ENCODE measurements at regions of chr11 and their contacts with region 1.

Region 1: DNA sequence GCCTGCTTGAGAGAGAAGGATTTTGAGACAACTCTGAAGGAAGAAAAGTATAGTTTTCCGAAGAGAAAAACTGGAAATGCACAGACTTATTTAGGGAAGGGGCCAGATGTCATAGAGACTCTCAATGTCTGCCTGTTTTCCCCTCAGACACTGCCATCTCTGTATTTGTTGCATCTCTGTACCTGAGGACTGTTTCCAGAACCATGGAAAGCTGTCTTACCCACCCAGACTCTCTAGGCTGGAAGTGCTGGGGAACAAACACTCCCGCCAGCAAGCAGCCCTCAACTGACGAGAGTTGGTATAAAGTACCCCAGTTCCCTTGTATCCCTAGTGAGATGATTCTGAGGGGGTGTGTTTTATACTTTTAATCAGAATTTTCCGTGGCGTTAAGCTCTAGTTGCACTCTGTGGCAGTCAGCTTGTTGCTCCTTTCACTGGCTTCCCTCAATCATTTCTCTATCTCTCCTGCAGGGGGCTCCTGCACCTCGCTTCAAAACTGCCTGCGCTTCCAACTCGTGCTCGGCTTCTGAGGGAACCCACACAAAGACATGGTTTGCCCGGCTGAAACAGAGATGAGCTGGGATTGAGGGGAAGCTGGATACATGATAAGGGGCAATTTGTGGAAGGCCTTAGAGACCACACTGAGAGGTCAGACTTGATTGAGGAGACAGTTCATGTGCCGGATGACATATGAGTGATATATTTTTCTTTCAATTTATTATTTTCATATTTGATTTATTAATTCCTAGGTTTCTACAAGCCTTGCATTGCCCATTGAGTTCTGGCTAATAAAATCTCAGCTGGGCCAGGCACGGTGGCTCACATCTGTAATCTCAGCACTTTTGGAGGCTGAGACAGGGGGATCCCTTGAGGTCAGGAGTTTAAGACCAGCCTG is 36.9 kb upstream of the CLPB start:
- DNase-seq: peak; percentile 66
- H3K4me3 Mint-ChIP-seq: no peak overlapping the region
- H3K27ac Mint-ChIP-seq: no peak overlapping the region
- H3K4me1 Mint-ChIP-seq: peaks cover 4% of the 10 kb centered on the region
- H3K27me3 Mint-ChIP-seq: peaks cover 57% of the 10 kb centered on the region

Region 2: DNA sequence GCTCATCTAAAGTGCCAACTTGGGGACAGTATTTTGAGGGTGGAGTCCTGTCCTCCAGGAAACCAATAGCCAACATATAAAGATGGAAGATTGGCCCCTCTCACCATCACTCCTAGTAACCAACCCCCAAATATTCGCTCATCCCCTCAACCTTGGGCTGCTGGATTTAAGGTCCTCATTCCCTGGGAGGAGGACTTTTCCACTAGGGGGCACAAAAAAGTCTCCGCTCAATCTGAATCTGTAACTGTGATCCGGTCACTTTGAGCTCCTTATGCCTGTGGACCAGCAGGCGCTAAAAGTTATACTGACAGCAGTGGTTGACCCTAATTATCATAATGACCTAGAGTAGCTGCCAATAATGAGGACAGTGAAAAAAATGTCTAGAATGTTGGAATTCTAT is 16.5 kb before region 1 on chr11:
- CTCF ChIA-PET with region 1: interaction called, 24 read pairs
- POLR2A ChIA-PET with region 1: no interaction called
- DNase-seq: no peak
- H3K4me3 Mint-ChIP-seq: no peak overlapping the region
- H3K27ac Mint-ChIP-seq: no peak overlapping the region
- H3K4me1 Mint-ChIP-seq: no peaks in the 10 kb centered on the region
- H3K27me3 Mint-ChIP-seq: peaks cover 10% of the 10 kb centered on the region

Region 3: GRCh38 chr11:72483412-72484186 is 12.3 kb after region 1 on chr11:
- CTCF ChIA-PET with region 1: interaction called, 15 read pairs
- POLR2A ChIA-PET with region 1: no interaction called
- DNase-seq: no peak
- H3K4me3 Mint-ChIP-seq: no peak overlapping the region
- H3K27ac Mint-ChIP-seq: peak overlapping the region; percentile 45
- H3K4me1 Mint-ChIP-seq: peaks cover 18% of the 10 kb centered on the region
- H3K27me3 Mint-ChIP-seq: peaks cover 8% of the 10 kb centered on the region

Region 4: DNA sequence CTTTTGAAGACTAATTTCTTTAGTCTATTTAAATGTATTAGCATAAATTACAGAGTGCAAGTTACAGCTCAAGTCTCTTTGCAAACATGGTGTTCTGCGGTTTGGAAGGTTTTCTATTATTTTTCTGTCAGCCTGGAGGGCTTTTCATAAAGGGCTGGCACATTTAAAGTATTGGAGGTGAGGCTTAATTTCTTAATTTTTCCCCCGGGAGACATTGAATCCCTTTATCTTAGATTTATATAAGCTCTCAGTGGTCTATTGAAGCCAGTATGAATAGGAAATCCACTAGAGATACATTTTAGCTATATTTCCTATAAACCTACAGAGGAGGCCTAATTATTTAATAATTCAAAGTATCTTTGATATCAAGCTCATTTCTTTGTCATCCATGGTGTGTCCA is 65.8 kb after region 1 on chr11:
- CTCF ChIA-PET with region 1: interaction called, 13 read pairs
- POLR2A ChIA-PET with region 1: interaction called, 3 read pairs
- DNase-seq: no peak
- H3K4me3 Mint-ChIP-seq: no peak overlapping the region
- H3K27ac Mint-ChIP-seq: no peak overlapping the region
- H3K4me1 Mint-ChIP-seq: no peaks in the 10 kb centered on the region
- H3K27me3 Mint-ChIP-seq: peaks cover 45% of the 10 kb centered on the region

Region 5: GRCh38 chr11:72553706-72554105 is 82.5 kb after region 1 on chr11:
- CTCF ChIA-PET with region 1: interaction called, 45 read pairs
- POLR2A ChIA-PET with region 1: interaction called, 7 read pairs
- DNase-seq: peak; percentile 58
- H3K4me3 Mint-ChIP-seq: no peak overlapping the region
- H3K27ac Mint-ChIP-seq: no peak overlapping the region
- H3K4me1 Mint-ChIP-seq: peaks cover 15% of the 10 kb centered on the region
- H3K27me3 Mint-ChIP-seq: peaks cover 25% of the 10 kb centered on the region

Region 6: GRCh38 chr11:72585762-72586311 is 114.6 kb after region 1 on chr11:
- CTCF ChIA-PET with region 1: interaction called, 27 read pairs
- POLR2A ChIA-PET with region 1: no interaction called
- DNase-seq: peak; percentile 75
- H3K4me3 Mint-ChIP-seq: peak overlapping the region; percentile 77
- H3K27ac Mint-ChIP-seq: no peak overlapping the region
- H3K4me1 Mint-ChIP-seq: peaks cover 45% of the 10 kb centered on the region
- H3K27me3 Mint-ChIP-seq: peaks cover 43% of the 10 kb centered on the region

Region 7: GRCh38 chr11:72683782-72684200 is 212.5 kb after region 1 on chr11:
- CTCF ChIA-PET with region 1: interaction called, 14 read pairs
- POLR2A ChIA-PET with region 1: interaction called, 3 read pairs
- DNase-seq: peak; percentile 70
- H3K4me3 Mint-ChIP-seq: no peak overlapping the region
- H3K27ac Mint-ChIP-seq: no peak overlapping the region
- H3K4me1 Mint-ChIP-seq: peaks cover 42% of the 10 kb centered on the region
- H3K27me3 Mint-ChIP-seq: peaks cover 6% of the 10 kb centered on the region

Region 8: DNA sequence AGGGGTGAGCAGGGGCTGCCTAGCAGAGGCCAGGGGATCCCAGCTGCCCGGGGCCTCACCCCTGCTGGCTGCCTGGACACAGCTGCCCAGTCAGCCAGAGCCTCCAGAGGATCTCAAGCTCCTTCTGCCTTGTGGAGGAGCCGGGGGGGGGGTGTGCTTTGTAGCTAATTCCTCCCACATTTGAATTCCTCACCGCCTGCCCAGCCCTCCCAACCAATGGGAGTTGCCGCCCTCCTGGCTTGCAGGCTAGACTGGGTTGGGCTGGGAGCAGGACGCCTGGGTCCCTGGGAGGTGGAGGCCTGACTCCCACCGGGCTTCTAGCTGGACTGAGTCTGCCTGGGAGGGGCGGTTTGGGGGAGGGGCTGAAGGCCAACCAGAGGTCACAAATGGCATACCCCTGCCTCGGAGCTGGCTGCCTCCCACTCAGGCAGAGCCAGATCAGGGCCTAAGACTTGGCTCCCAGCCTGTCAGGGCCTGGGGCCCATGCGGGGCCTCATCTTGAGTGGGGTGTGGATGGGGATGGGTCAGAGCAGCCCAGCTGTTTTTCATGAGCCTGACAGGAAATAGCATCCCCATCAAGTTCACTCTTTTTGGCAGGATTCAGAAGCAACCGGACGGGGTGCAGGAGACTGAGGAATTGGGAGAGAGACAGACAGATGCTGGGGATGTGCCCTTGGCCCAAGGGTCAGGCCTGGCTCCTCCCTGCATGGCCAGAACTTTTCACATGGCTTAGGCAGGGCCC is 232.2 kb after region 1 on chr11:
- CTCF ChIA-PET with region 1: no interaction called
- POLR2A ChIA-PET with region 1: no interaction called
- DNase-seq: no peak
- H3K4me3 Mint-ChIP-seq: no peak overlapping the region
- H3K27ac Mint-ChIP-seq: no peak overlapping the region
- H3K4me1 Mint-ChIP-seq: no peaks in the 10 kb centered on the region
- H3K27me3 Mint-ChIP-seq: no peaks in the 10 kb centered on the region

Measured in activated CD4-positive, alpha-beta memory T cell treated with anti-CD3 and anti-CD28 coated beads, Interleukin-2, amount 10 ng/mL, durations not matched to agents 7 days and 5 days (primary cell).